Caco-2 (cell line): ENCODE measurements at regions of chr14 and their contacts with region 1.

Region 1: DNA sequence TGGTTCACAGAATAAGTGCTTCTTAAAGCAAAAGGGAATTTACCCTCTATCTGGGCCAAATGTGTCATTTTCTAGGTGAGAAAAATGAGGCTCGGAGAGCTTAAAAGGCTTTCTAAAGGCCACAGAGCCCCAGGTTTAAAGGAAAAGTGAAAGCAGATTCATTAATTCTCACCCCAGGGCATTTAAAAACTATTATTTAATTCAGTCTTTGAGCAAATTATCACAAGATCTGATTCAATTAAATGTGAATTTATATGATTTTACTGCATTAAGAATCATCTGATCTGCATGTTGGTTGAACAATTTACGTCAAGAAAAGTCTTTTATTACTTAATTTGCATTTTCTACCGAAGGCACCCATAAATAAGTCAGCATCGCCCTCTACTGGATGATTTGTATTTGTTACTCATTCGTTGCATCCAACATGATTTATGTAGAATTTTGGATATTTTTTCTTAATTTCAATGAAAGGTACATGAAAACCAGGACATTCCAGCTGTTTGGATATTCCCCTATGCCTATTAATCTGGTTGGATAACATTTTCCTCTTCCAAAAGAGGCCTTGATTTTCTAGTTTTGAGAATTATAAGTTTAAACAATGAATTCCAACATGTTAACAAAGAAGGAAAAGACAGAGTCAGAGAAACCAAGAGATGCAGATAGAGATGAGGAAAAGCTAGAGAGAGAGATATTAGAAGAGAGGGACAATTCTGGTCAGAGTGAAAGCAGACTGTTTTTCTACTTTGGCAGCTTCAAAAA is 19.1 kb upstream of the DHRS7 start:
- DNase-seq: peak in 1 of 2 experiments; percentile 52
- H3K4me3 ChIP-seq: peak overlapping the region; percentile 13; the same call in 1 of the 2 replicates
- H3K4me3 Mint-ChIP-seq: peak overlapping the region; percentile 20
- H3K27ac Mint-ChIP-seq: no peak overlapping the region
- H3K4me1 ChIP-seq: no peaks in the 10 kb centered on the region
- H3K4me1 Mint-ChIP-seq: no peaks in the 10 kb centered on the region
- H3K27me3 ChIP-seq: no peaks in the 10 kb centered on the region
- H3K27me3 Mint-ChIP-seq: no peaks in the 10 kb centered on the region
- CTCF ChIP-seq: peak; percentile 52 to 69

Region 2: GRCh38 chr14:59576332-59577294 is 607.7 kb before region 1 on chr14 and contains the start of gene CCDC175:
- CTCF ChIA-PET with region 1: no interaction called
- POLR2A ChIA-PET with region 1: no interaction called
- intact Hi-C with region 1: loop called (anchors 10 kb)
- DNase-seq: peak; percentile 81 to 84
- H3K4me3 ChIP-seq: peak within 1 kb of the TSS; percentile 39
- H3K4me3 Mint-ChIP-seq: peak within 1 kb of the TSS; percentile 69
- H3K27ac Mint-ChIP-seq: no peak within 1 kb of the TSS
- H3K4me1 ChIP-seq: no peaks in the 10 kb centered on the region
- H3K4me1 Mint-ChIP-seq: no peaks in the 10 kb centered on the region
- H3K27me3 ChIP-seq: no peaks in the 10 kb centered on the region
- H3K27me3 Mint-ChIP-seq: no peaks in the 10 kb centered on the region
- CTCF ChIP-seq: peak; percentile 77 to 81
- total RNA-seq, gene CCDC175: not detected in 2 replicates

Region 3: DNA sequence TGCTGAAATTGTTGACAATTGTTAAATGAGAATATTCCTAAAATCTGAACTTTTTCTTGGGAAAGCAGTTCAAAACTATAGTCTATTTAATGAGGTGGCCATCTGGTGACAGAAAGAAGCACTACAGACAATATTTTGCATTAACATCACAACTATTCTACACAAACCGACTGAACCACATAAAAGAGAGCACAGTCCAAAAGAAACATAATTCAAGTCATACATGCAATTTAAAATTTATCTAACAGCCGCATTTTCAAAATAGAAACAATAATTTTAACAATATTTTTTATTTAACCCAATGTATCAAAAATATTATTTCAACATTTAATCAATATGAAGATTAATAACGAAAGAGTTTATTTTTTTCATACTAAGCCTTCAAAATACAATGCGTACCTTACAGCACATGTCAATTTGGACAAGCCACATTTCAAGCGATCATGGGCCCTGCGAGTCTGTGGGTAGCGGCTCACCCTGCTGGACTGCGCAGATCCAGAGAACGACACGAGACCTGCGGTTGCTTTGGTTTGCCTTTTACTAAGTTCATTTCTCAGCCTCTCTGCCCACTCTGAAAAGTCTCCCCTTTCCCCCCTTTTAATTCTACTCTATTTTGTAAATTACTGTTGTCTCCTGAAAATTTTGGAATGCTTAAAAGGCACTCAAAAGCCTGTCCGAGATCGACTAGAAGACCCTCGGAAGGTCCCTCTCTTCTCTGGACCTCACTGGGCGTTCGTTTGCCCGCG is 265.3 kb before region 1 on chr14:
- CTCF ChIA-PET with region 1: no interaction called
- POLR2A ChIA-PET with region 1: no interaction called
- intact Hi-C with region 1: loop called (anchors 10 kb)
- DNase-seq: peak; percentile 23 to 38
- H3K4me3 ChIP-seq: peak overlapping the region; percentile 45
- H3K4me3 Mint-ChIP-seq: peak overlapping the region; percentile 85
- H3K27ac Mint-ChIP-seq: peak overlapping the region; percentile 98
- H3K4me1 ChIP-seq: peaks cover 10% of the 10 kb centered on the region
- H3K4me1 Mint-ChIP-seq: peaks cover 5% of the 10 kb centered on the region
- H3K27me3 ChIP-seq: no peaks in the 10 kb centered on the region
- H3K27me3 Mint-ChIP-seq: no peaks in the 10 kb centered on the region
- CTCF ChIP-seq: peak; percentile 34 to 50

Region 4: GRCh38 chr14:60014402-60014801 is 169.9 kb before region 1 on chr14:
- CTCF ChIA-PET with region 1: no interaction called
- POLR2A ChIA-PET with region 1: no interaction called
- intact Hi-C with region 1: no loop called
- DNase-seq: no peak
- H3K4me3 ChIP-seq: no peak overlapping the region
- H3K4me3 Mint-ChIP-seq: no peak overlapping the region
- H3K27ac Mint-ChIP-seq: no peak overlapping the region
- H3K4me1 ChIP-seq: no peaks in the 10 kb centered on the region
- H3K4me1 Mint-ChIP-seq: no peaks in the 10 kb centered on the region
- H3K27me3 ChIP-seq: no peaks in the 10 kb centered on the region
- H3K27me3 Mint-ChIP-seq: no peaks in the 10 kb centered on the region
- CTCF ChIP-seq: no peak

Region 5: GRCh38 chr14:60064491-60065072 is 119.7 kb before region 1 on chr14:
- CTCF ChIA-PET with region 1: interaction called, 4 read pairs
- POLR2A ChIA-PET with region 1: no interaction called
- intact Hi-C with region 1: loop called (anchors 1 kb)
- DNase-seq: no peak
- H3K4me3 ChIP-seq: no peak overlapping the region
- H3K4me3 Mint-ChIP-seq: no peak overlapping the region
- H3K27ac Mint-ChIP-seq: no peak overlapping the region
- H3K4me1 ChIP-seq: no peaks in the 10 kb centered on the region
- H3K4me1 Mint-ChIP-seq: no peaks in the 10 kb centered on the region
- H3K27me3 ChIP-seq: no peaks in the 10 kb centered on the region
- H3K27me3 Mint-ChIP-seq: no peaks in the 10 kb centered on the region
- CTCF ChIP-seq: peak; percentile 31 to 58

Region 6: GRCh38 chr14:60151715-60152114 is 32.6 kb before region 1 on chr14:
- CTCF ChIA-PET with region 1: no interaction called
- POLR2A ChIA-PET with region 1: no interaction called
- intact Hi-C with region 1: no loop called
- DNase-seq: no peak
- H3K4me3 ChIP-seq: no peak overlapping the region
- H3K4me3 Mint-ChIP-seq: no peak overlapping the region
- H3K27ac Mint-ChIP-seq: no peak overlapping the region
- H3K4me1 ChIP-seq: peaks cover 6% of the 10 kb centered on the region; the same call in 1 of the 2 replicates
- H3K4me1 Mint-ChIP-seq: peaks cover 16% of the 10 kb centered on the region
- H3K27me3 ChIP-seq: no peaks in the 10 kb centered on the region
- H3K27me3 Mint-ChIP-seq: no peaks in the 10 kb centered on the region
- CTCF ChIP-seq: no peak

Region 7: GRCh38 chr14:60561845-60562746 is 377.8 kb after region 1 on chr14:
- CTCF ChIA-PET with region 1: no interaction called
- POLR2A ChIA-PET with region 1: no interaction called
- intact Hi-C with region 1: loop called (anchors 1 kb)
- DNase-seq: peak; percentile 51 to 58
- H3K4me3 ChIP-seq: no peak overlapping the region
- H3K4me3 Mint-ChIP-seq: no peak overlapping the region
- H3K27ac Mint-ChIP-seq: no peak overlapping the region
- H3K4me1 ChIP-seq: no peaks in the 10 kb centered on the region
- H3K4me1 Mint-ChIP-seq: no peaks in the 10 kb centered on the region
- H3K27me3 ChIP-seq: no peaks in the 10 kb centered on the region
- H3K27me3 Mint-ChIP-seq: peaks cover 5% of the 10 kb centered on the region
- CTCF ChIP-seq: peak; percentile 73 to 76

Region 8: DNA sequence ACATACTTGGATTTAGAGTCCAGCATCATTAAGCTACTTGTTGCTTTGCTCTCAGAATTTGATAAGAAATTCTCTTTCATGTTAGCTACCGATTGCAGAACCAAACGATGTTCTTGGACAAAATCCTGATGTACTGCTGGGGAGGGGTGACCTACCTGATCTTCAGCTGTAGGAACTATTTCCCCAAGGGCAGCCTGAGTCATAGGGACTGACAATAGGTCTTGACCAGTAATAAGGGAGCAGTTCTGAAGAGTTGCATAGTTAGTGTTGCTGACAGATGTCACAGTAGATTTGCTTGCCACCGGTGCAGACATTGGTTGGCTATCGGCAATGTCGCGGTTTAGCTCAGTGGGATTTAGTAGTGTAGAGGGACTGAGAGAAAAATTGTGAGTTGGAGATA is 529.2 kb after region 1 on chr14:
- CTCF ChIA-PET with region 1: no interaction called
- POLR2A ChIA-PET with region 1: no interaction called
- intact Hi-C with region 1: no loop called
- DNase-seq: no peak
- H3K4me3 ChIP-seq: no peak overlapping the region
- H3K4me3 Mint-ChIP-seq: no peak overlapping the region
- H3K27ac Mint-ChIP-seq: no peak overlapping the region
- H3K4me1 ChIP-seq: no peaks in the 10 kb centered on the region
- H3K4me1 Mint-ChIP-seq: no peaks in the 10 kb centered on the region
- H3K27me3 ChIP-seq: no peaks in the 10 kb centered on the region
- H3K27me3 Mint-ChIP-seq: no peaks in the 10 kb centered on the region
- CTCF ChIP-seq: no peak